IMR-90 (cell line): ENCODE measurements at regions of chr2 and their contacts with region 1.

Region 1: GRCh38 chr2:204260162-204260877 is 285.0 kb upstream of the PARD3B start:
- DNase-seq: peak; percentile 74
- ATAC-seq: peak; percentile 94
- H3K4me3 ChIP-seq: no peak overlapping the region
- H3K27ac ChIP-seq: no peak overlapping the region
- H3K4me1 ChIP-seq: peaks cover 3% of the 10 kb centered on the region; the same call in 1 of the 2 replicates
- H3K27me3 ChIP-seq: no peaks in the 10 kb centered on the region; the same call in none of the 2 replicates
- CTCF ChIP-seq: peak; percentile 79
- POLR2A ChIP-seq: no peak
- RAD21 ChIP-seq: peak; percentile 76

Region 2: GRCh38 chr2:204187229-204188083 is 72.9 kb before region 1 on chr2:
- CTCF ChIA-PET with region 1: no interaction called
- POLR2A ChIA-PET with region 1: no interaction called
- dilution Hi-C with region 1: no loop called
- in situ Hi-C with region 1: no loop called
- intact Hi-C with region 1: no loop called
- DNase-seq: no peak
- ATAC-seq: no peak
- H3K4me3 ChIP-seq: no peak overlapping the region
- H3K27ac ChIP-seq: no peak overlapping the region
- H3K4me1 ChIP-seq: no peaks in the 10 kb centered on the region
- H3K27me3 ChIP-seq: peaks cover 9% of the 10 kb centered on the region
- CTCF ChIP-seq: no peak
- POLR2A ChIP-seq: no peak
- RAD21 ChIP-seq: no peak

Region 3: GRCh38 chr2:204306667-204307066 is 46.3 kb after region 1 on chr2:
- CTCF ChIA-PET with region 1: no interaction called
- POLR2A ChIA-PET with region 1: no interaction called
- dilution Hi-C with region 1: no loop called
- in situ Hi-C with region 1: no loop called
- intact Hi-C with region 1: no loop called
- DNase-seq: no peak
- ATAC-seq: no peak
- H3K4me3 ChIP-seq: no peak overlapping the region
- H3K27ac ChIP-seq: no peak overlapping the region
- H3K4me1 ChIP-seq: no peaks in the 10 kb centered on the region
- H3K27me3 ChIP-seq: no peaks in the 10 kb centered on the region; the same call in 1 of the 2 replicates
- CTCF ChIP-seq: no peak
- POLR2A ChIP-seq: no peak
- RAD21 ChIP-seq: no peak

Region 4: DNA sequence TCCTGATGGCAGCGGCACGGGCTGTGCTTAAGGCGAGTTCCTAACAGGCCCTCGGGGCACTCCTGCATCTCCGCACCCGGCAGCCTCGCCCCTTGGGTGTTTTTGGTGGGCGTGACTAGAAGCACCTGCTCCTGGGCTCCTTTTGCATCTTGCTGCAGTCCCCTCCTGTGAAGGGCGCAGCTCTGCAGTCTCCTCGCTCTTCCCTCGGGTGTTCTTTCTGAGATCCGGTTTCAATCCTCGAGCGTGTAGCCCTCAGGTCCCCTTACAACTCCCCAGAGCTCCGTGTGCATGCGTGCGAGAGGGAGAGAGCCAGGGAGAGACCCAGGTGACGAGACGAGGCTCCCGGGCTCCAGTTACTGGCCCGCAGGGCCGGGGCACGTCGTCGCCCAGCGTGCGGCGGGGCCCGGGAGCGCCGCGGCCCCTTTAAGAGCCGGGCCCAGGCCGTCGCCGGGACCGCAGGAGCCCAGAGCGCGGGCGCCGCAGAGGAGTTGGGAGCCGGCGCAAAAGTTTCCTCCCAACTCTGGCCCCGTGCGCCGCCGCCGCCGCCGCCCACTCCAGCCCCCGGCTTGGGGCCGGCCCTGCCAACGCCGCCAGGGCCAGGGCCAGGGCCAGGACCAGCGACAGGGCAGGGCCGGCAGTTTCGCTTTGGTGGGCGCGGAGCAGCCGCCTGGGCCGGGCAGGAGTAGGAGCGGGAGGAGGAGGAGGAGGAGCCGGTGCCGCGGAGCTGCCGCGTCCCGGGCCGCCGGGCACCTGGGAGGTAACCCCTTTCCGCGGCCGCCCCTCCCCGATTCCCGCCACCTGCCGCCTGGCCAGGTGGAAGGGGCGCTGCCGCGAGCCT is 284.9 kb after region 1 on chr2 and contains the start of gene PARD3B:
- CTCF ChIA-PET with region 1: no interaction called
- POLR2A ChIA-PET with region 1: no interaction called
- dilution Hi-C with region 1: no loop called
- in situ Hi-C with region 1: no loop called
- intact Hi-C with region 1: loop called (anchors 2 kb)
- DNase-seq: peak; percentile 62
- ATAC-seq: peak; percentile 94
- H3K4me3 ChIP-seq: peak within 1 kb of the TSS; percentile 83
- H3K27ac ChIP-seq: peak within 1 kb of the TSS; percentile 96
- H3K4me1 ChIP-seq: peaks cover 7% of the 10 kb centered on the region; the same call in 1 of the 2 replicates
- H3K27me3 ChIP-seq: no peaks in the 10 kb centered on the region
- CTCF ChIP-seq: no peak
- POLR2A ChIP-seq: peak; percentile 41; the same call in 1 of the 2 replicates
- RAD21 ChIP-seq: no peak
- total RNA-seq, gene PARD3B: 15.3 and 15.6 TPM in 2 replicates

Region 5: GRCh38 chr2:204871231-204871953 is 611.1 kb after region 1 on chr2:
- CTCF ChIA-PET with region 1: no interaction called
- POLR2A ChIA-PET with region 1: no interaction called
- dilution Hi-C with region 1: no loop called
- in situ Hi-C with region 1: no loop called
- intact Hi-C with region 1: loop called (anchors 5 kb)
- DNase-seq: peak; percentile 69
- ATAC-seq: peak; percentile 64; the same call in 1 of the 2 replicates
- H3K4me3 ChIP-seq: no peak overlapping the region
- H3K27ac ChIP-seq: no peak overlapping the region
- H3K4me1 ChIP-seq: peaks cover 4% of the 10 kb centered on the region
- H3K27me3 ChIP-seq: no peaks in the 10 kb centered on the region
- CTCF ChIP-seq: peak; percentile 61
- POLR2A ChIP-seq: no peak
- RAD21 ChIP-seq: peak; percentile 65

Region 6: DNA sequence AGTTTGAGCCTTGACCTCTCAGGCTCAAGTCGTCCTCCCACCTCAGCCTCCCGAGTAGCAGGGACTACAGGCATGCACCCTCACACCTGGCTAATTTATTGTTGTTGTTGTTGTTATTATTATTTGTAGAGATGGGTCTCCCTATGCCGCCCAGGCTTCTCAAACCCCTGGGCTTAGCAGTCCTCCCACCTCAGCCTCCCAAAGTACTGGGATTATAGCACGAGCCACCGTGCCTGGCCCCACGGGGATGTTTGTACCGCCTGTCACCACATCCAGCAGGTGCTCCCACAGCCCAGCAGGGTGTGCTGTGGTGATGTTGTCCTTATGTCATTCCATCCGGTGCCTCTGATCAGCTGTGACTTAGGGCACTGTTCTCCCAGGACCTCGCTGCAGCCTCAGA is 1643.3 kb after region 1 on chr2:
- CTCF ChIA-PET with region 1: no interaction called
- POLR2A ChIA-PET with region 1: no interaction called
- dilution Hi-C with region 1: no loop called
- in situ Hi-C with region 1: loop called (anchors 25 kb)
- intact Hi-C with region 1: no loop called
- DNase-seq: no peak
- ATAC-seq: no peak
- H3K4me3 ChIP-seq: no peak overlapping the region
- H3K27ac ChIP-seq: no peak overlapping the region
- H3K4me1 ChIP-seq: peaks cover 4% of the 10 kb centered on the region; the same call in 1 of the 2 replicates
- H3K27me3 ChIP-seq: peaks cover 13% of the 10 kb centered on the region
- CTCF ChIP-seq: peak; percentile 16; the same call in 1 of the 2 replicates
- POLR2A ChIP-seq: no peak
- RAD21 ChIP-seq: no peak

Region 7: GRCh38 chr2:205947621-205948495 is 1687.5 kb after region 1 on chr2:
- CTCF ChIA-PET with region 1: no interaction called
- POLR2A ChIA-PET with region 1: no interaction called
- dilution Hi-C with region 1: no loop called
- in situ Hi-C with region 1: no loop called
- intact Hi-C with region 1: loop called (anchors 5 kb)
- DNase-seq: peak; percentile 78
- ATAC-seq: peak; percentile 97
- H3K4me3 ChIP-seq: no peak overlapping the region
- H3K27ac ChIP-seq: no peak overlapping the region
- H3K4me1 ChIP-seq: no peaks in the 10 kb centered on the region; the same call in 1 of the 2 replicates
- H3K27me3 ChIP-seq: peaks cover 5% of the 10 kb centered on the region; the same call in 1 of the 2 replicates
- CTCF ChIP-seq: peak; percentile 95
- POLR2A ChIP-seq: no peak
- RAD21 ChIP-seq: peak; percentile 79